BJ (cell line): ENCODE measurements at regions of chr11 and their contacts with region 1.

Region 1: DNA sequence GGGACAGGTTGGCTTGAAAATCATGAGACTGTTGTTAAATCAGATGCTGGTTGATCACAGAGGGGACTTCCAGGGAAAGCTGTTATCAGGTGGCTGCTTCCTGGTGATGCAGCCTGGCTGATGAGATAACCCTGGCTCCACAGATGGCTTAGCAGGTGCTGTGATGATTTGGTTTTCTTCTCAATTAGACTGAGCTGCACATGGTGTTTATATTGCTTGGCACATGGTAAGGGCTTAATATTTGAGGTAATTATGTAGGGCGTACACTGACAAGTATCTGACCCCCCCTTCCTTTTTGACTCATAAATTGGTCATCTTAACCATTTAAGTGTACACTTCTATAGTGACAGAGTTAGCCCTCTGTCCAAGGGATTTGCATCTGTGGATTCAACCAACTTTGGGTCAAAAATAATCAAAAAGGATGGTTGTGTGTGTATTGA is 7.0 kb downstream of the RPS3 start:
- DNase-seq: no peak
- H3K4me3 ChIP-seq: no peak overlapping the region
- H3K27me3 ChIP-seq: no peaks in the 10 kb centered on the region
- CTCF ChIP-seq: no peak

Region 2: DNA sequence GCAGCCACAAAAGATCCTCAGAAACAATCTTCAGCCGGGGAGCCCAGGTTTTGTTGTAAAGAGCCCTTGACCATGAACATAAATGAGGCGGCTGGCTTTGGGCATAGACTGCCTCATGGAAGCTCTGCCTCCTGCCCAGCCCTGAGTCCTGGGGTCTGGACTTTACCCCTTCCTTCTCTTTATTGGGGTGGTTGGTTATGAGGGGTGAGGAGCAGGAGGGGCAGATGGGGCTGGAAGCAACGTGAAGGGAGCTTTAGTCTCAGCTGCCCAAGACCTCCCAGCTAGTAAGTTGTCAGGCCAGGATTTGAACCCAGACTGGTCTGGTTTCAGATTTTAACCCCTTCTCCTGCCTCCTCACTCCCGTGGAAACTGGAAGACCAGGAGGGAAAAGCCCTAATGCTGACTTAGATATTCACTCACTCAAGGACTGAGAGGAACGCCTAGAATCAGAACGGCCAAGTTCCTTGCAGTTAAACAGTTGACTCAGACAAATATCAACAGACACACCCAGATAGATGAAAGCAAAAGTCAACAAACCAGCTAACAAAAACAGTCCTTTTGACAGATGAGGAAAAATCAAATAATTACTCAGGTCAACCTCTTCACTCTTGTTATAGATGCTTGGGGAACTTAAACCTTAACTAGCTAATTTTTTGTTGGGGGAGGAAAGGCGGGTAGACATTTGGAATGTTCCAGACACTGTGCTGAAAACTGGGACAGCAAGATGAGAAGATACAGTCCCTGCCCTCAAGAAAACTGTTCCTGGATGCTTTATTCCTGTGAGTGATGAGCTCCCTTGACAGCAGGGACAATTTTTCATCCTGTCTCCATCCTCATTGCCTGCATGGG is 34.2 kb before region 1 on chr11:
- CTCF ChIA-PET with region 1: no interaction called
- POLR2A ChIA-PET with region 1: no interaction called
- DNase-seq: no peak
- H3K4me3 ChIP-seq: no peak overlapping the region
- H3K27me3 ChIP-seq: peaks cover 5% of the 10 kb centered on the region
- CTCF ChIP-seq: no peak

Region 3: DNA sequence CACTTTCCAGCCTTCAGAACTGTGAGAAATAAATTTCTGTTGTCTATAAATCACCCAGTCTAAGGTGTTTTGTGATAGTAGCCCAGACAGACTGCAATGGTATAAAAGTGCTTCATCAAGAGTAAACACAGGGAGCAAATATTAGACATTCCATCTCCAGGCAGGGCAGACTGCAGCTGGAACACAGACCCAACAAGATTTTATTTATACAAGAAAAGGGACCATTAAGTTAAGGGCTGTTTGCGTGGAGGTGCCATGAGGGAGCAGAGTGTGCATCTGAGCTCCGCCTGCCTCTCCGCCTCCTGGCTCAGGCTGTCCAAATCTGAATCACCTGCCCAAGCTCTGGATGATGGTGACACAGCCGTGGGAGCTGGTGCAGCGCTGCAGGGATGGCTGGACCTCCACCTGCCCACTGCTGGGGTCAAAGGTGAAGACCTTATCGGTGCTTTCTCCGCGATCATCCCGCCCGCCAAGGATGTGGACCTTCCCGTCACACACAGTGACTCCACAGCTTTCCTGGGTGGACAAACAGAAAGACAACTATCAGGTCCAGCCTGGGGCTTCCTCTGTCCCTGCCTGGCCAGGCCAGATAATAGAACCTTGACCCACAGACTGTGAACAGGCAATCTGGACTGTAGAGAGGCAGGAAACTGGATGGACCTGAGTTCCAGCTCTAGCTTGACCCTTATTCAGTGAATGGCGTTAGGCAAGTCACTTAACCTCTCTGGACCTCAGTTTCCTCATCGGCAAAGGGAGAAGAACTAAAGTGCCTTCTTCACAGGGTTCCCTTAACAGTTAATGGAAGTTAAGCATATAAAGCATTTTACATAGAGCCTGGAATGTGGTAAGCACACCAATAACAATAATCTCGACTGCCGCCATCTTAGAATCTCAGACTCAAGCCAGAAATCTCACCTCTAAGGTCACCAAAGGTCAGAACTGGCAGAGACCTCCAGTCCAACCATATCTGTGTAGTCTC is 16.2 kb after region 1 on chr11:
- CTCF ChIA-PET with region 1: interaction called, 26 read pairs
- POLR2A ChIA-PET with region 1: no interaction called
- DNase-seq: no peak
- H3K4me3 ChIP-seq: no peak overlapping the region
- H3K27me3 ChIP-seq: no peaks in the 10 kb centered on the region
- CTCF ChIP-seq: no peak

Region 4: GRCh38 chr11:75429902-75430719 is 23.8 kb after region 1 on chr11:
- CTCF ChIA-PET with region 1: interaction called, 18 read pairs
- POLR2A ChIA-PET with region 1: no interaction called
- DNase-seq: no peak
- H3K4me3 ChIP-seq: peak overlapping the region; percentile 27
- H3K27me3 ChIP-seq: peaks cover 26% of the 10 kb centered on the region
- CTCF ChIP-seq: no peak

Region 5: DNA sequence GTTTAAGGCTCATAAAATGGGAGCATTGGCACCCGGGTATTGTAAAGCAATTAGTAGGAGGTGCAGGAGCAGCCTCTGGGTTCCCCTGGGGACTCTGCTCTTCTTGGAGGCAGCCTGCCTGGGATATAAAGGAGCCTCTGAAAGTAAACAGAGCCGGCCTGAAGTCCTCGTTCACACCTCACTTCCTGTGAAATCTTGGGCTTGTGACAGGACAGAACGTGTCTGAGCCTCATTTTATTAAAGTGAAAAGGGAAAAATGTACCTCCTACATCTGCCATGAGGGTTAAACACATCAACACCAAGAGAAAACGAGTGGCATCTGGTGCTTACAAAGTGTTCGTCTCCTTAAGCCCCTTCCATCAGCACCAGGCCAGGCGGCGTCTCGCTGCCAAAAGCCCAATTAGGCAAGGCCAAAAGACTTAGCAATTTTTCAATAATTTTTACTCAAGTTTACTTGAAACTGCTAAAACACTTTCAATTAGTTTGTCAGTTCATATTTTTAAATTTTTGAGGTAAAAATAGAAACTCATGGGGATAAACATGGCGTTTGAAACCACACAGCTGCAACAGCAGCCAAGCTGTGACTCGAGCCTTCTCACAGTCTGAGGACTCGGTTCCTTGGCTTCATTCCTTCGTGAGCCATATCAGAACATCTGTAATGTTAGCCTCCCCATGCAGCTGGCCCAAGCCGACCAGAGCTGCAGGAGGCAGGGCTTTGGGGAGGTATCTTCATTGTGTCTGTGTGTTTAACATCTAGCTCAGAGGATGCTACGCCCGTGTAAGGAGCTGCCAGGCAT is 228.9 kb after region 1 on chr11:
- CTCF ChIA-PET with region 1: no interaction called
- POLR2A ChIA-PET with region 1: no interaction called
- DNase-seq: no peak
- H3K4me3 ChIP-seq: no peak overlapping the region
- H3K27me3 ChIP-seq: no peaks in the 10 kb centered on the region
- CTCF ChIP-seq: no peak

Region 6: GRCh38 chr11:75814686-75815344 is 408.5 kb after region 1 on chr11 and contains the start of gene UVRAG:
- CTCF ChIA-PET with region 1: no interaction called
- POLR2A ChIA-PET with region 1: no interaction called
- DNase-seq: peak; percentile 99
- H3K4me3 ChIP-seq: peak within 1 kb of the TSS; percentile 73
- H3K27me3 ChIP-seq: no peaks in the 10 kb centered on the region; the same call in 1 of the 2 replicates
- CTCF ChIP-seq: 0 out of 2 replicates have a peak, but pooled peaks have one; percentile 5
- polyA plus RNA-seq, gene UVRAG: 8.2 and 10.7 TPM in 2 replicates